ENCODE measurements at regions of chr13 and their contacts with region 1.

Region 1: GRCh38 chr13:44435142-44435982 is 61.7 kb downstream of the SERP2 start:
- DNase-seq: peak; percentile 85 to 98 (median 93)

Region 2: DNA sequence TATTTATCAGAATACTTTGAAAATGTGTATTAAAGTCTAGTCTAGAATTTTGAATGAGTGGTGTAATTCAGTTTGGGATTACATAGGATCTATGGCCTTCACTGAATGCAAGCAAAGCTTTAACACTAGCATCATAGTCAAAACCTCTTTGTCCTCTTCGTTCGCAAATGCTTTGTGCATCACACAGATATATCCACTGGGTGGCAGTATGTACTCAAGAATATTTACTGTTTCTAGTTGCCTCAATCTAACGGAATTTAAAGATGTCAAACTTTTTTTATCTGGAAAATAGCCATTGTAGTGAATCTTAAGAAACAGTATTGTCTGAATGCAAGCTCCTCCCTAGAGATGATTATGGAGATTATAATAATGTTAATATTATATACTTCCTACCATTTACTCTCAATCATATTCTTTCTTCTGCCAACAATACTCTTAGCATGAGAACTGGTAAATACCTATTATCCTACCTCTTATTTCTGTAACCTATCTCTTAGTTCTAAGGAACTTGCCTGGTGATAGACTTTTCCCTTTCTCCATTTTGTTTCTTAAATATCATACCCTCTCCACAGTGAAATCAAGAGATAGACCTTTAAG is 529.8 kb before region 1 on chr13:
- intact Hi-C with region 1: loop called (anchors 5 kb)
- DNase-seq: peak in 25 of 42 donors; percentile 11 to 82 (median 53)

Region 3: DNA sequence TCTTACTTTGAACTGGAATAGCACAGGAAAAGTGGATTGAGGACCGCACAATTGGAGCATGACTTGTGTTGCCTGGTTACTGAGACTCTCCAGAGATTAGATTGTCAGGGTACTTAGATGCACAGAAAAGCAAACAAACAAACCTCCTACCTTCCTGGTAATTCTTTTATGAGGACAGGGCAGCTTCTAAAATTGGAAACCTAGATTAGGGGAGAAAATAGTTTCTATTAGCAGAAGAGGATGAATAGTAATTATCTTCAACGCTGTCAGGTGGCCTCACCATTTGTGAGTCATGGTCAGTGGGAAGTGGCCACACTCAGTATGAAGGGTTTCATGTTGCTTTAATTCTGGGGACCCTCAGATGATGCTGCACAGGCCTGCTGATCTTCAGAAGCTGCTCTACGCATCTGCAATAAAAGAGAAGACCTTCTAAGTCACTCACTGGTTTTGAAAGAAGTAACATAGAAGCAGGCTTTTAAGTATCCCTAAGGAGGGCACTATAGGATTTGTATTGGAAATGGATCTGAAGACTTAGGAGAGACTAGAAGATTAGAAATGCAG is 448.9 kb before region 1 on chr13:
- intact Hi-C with region 1: no loop called
- DNase-seq: no peak

Region 4: DNA sequence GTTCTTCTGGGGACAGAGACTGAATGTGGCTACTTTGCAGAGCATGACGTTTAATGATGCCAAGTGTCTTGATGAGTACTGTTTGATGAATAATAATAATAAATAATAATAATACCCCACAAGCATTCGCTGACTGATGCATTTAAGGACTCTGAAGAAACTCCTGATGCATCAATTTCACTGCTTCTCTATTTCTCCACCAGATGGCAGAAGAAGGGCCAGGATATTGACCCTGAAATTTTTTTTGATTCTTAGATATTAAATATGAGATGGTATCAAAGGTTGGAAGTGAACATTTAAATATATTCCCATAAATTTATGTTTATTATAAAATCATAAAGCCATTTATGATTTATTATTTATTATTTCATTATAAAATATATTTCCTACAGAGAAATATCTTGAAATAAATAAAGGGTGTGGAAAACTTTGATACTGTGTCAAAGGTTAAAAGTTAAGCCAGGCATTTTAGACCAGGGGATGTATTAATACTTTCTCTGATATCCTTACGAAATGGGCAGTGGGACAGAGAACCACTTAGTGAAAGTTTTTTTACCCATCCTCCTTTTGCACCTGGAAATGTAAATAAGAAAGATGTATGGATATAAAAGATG is 384.8 kb before region 1 on chr13:
- intact Hi-C with region 1: loop called (anchors 5 kb)
- DNase-seq: peak in 7 of 42 donors; percentile 14 to 62 (median 27)

Region 5: DNA sequence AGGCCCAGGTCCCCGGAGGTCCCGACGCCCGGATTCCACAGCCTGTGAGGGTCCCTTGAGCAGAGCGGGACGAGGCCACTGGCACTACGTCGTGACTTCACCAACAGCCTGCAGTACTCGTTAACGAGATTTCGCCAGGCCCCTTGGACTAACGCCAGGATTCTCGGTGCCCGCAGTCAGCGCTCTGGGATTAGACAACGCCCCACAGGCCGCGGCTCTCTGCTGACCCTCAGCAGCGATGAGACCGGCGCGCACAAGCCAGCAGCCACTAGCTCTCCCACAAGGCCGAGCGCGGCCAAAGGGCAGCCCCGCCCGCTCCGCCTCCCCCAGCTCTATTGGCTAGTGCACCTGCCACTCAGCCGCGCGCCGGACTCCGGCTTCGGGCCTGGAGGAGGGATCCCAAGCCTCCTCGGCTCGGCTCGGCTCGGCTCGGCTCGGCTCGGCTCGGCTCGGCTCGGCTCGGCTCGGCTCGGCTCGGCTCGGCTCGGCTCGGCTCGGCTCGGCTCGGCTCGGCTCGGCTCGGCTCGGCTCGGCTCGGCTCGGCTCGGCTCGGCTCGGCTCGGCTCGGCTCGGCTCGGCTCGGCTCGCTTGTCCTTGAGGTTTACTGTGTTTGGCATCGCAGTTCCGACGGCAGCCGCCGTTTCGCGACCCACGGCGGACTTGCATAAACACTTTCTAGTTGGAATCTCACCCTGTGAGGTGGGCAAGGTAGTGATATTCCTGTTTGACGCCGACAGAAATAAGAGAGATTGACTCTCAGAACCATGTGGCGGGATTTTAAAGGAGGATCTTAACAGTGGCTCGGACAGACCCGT is 293.4 kb before region 1 on chr13:
- intact Hi-C with region 1: loop called (anchors 5 kb)
- DNase-seq: peak; percentile 95 to 100 (median 99)

Region 6: DNA sequence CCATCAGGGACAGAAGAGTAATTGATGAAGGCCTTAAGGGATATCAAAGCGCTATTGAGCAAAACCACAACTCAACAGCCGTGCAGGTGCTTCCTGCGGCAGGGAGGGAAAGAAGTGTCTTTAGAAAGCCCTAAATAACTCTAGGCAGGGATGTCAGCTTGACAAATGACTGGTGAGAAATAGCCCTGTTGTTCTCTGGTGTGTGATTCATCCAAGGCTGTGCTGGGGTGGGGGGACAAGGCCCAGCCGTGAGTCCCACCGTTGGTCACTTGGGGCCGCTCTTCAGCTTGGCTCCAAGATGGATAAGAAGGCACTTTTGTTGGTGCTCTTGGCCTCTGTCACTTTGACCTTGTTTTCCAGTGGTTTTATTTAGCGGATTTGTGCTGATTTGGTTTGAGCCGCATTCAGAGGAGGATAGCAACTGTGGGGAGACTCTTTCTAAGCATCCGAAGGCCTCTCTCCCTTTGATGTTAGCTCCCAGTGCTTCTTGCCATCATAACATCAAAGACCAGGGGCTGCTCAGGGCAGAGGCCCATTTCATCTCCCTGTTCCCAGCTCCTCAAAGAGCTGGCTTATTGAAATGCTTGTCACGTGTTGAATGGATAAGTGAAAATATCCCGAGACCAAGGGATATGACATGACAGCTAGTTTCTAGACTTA is 192.0 kb before region 1 on chr13:
- intact Hi-C with region 1: loop called (anchors 10 kb)
- DNase-seq: peak in 41 of 42 donors; percentile 43 to 91 (median 73)

Region 7: DNA sequence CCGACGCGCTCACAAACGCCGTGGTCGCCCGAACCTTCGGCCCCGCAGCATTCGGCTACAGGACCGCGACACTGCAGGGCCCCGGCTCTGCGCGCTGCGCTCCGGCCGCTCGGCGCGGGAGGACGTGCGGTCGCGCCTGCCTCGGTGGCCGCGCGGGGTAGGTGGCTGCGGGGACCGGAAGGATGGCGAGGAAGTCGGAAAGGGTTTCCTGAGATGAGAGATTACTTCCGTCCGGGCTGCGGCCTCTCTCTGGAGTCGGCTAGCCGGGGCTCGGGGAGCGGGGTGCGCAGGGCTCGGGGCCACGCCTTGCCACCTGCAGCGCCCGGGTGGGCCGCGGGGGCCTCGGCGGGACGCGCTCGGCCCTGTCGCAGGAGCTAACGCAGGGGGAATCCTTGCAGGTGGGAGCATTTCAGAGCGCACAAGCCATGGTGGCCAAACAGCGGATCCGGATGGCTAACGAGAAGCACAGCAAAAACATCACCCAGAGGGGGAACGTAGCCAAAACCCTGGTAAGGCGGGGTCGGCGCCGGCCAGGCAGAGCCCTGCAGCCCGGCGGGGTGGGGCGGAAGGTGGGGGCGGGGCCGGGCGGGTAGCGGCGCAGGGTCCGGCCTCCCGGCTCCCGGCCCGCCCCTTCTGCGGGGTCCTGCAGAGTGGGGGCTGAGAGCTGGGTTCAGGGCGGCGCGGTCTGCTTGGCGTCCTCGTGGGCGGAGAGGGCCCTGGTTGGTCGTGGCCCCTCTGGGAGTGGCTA is 61.6 kb before region 1 on chr13 and contains the start of gene SERP2:
- intact Hi-C with region 1: loop called (anchors 2 kb)
- DNase-seq: peak; percentile 25 to 84 (median 63)

Region 8: DNA sequence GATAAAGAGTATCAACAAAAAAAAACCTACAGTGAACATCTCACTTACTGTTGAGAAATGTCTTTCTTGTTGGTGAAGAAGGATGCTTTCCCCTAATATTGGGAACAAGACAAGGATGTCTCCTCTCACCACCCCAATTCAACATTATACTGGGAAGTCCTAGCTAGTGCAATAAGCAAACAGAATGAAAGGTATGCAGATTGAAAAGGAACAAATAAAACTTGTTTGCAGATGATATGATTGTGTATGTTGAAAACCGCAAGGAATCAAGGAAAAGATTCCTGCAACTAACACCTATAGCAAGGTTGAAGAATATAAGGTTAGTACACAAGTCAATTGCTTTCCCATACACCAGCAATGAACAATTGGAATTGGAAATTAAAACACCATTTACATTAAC is 94.1 kb after region 1 on chr13:
- intact Hi-C with region 1: no loop called
- DNase-seq: no peak

Measured in head of caudate nucleus (tissue), 42 donors.